Ovary (tissue), 10 donors: ENCODE measurements at regions of chr1 and their contacts with region 1.

Region 1: GRCh38 chr1:58739856-58740466 is 40.1 kb upstream of the MYSM1 start:
- DNase-seq: no peak
- H3K4me3 ChIP-seq: no peak overlapping the region
- H3K27ac ChIP-seq: no peak overlapping the region
- H3K4me1 ChIP-seq: no peaks in the 10 kb centered on the region
- H3K27me3 ChIP-seq: no peaks in the 10 kb centered on the region
- CTCF ChIP-seq: peak; percentile 68 to 85 (median 83)
- EP300 ChIP-seq: no peak
- POLR2A ChIP-seq: no peak

Region 2: GRCh38 chr1:58768971-58769808 is 29.2 kb after region 1 on chr1:
- intact Hi-C with region 1: loop called in 1 of 4 experiments (anchors 2 kb)
- DNase-seq: peak; percentile 78 to 91 (median 86)
- H3K4me3 ChIP-seq: no peak overlapping the region
- H3K27ac ChIP-seq: no peak overlapping the region
- H3K4me1 ChIP-seq: no peaks in the 10 kb centered on the region
- H3K27me3 ChIP-seq: no peaks in the 10 kb centered on the region
- CTCF ChIP-seq: peak; percentile 59 to 73 (median 73)
- EP300 ChIP-seq: no peak
- POLR2A ChIP-seq: no peak

Region 3: GRCh38 chr1:59699227-59699847 is 959.4 kb after region 1 on chr1:
- intact Hi-C with region 1: loop called in 2 of 4 experiments (anchors 10 kb)
- DNase-seq: peak in 1 of 5 donors; percentile 34
- H3K4me3 ChIP-seq: no peak overlapping the region
- H3K27ac ChIP-seq: no peak overlapping the region
- H3K4me1 ChIP-seq: peaks cover 3% of the 10 kb centered on the region
- H3K27me3 ChIP-seq: no peaks in the 10 kb centered on the region
- CTCF ChIP-seq: peak; percentile 75 to 92 (median 86)
- EP300 ChIP-seq: no peak
- POLR2A ChIP-seq: no peak

Region 4: DNA sequence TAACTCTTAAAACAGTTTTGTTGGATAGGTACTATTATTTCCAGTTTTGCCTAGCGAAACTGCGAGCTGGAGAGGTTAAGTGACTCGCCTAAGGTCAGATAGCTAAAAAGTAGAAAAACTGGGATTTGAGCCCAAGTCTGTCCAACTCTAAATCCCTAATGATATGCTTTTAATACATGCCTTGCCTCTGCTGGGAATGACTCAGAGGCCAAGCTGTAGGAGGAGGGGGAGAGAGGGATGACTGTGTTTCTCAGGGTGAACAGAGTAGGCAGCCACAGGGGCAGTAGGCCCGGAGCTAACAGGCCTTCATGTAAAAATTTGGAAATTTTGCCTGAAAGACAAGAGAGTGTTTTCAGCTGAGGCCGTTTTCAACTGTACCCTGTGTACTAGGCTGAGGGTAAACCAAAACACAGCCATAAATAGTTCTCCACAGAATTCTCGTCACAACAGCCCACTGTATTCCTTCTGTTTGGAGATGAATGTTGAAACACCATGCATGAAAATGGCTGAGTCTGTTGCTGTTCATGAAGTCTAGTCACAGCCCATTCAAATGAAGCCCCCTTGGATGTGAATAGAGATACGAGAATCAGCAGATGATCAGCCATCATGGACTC is 967.3 kb after region 1 on chr1:
- intact Hi-C with region 1: loop called in 1 of 4 experiments (anchors 10 kb)
- DNase-seq: peak; percentile 49 to 77 (median 62)
- H3K4me3 ChIP-seq: no peak overlapping the region
- H3K27ac ChIP-seq: peak overlapping the region in 1 of 2 donors; percentile 41
- H3K4me1 ChIP-seq: peaks cover 11% of the 10 kb centered on the region
- H3K27me3 ChIP-seq: no peaks in the 10 kb centered on the region
- CTCF ChIP-seq: no peak
- EP300 ChIP-seq: no peak
- POLR2A ChIP-seq: no peak

Region 5: DNA sequence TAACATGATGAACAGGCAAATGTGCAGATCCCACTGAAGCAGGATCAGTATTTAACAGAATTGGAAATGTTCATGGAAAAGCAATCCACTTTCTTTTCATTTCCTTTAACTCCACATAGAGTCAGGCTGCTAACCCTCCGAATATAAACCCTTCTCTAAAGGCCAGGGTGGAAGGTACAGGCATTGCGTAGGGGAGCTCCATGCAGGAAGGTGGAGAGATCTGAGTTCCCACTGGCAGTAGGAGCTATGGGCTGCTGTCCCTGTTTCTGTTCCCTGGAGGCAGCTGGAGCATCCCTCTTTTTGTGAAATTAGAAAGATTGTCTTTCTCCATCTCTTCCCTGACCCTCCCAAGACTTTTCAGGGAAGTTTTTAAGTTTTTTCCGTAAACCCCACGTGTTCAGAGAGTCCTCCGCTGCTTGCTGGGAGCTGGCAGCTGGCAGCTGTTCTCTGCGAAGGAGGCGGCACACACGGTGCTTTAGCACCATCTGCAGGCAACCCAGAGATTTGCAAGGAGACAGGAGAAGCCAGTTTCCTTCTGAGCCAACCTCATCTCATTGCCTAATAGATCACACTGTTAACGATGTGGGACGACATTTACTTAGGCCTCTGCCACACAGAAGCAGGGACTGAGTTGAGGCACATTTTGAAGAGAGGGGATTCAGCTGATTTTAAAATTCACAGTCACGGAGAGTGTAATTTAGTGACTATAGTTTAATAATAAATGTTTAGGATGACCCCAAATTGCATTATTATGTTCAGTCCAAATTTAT is 1019.4 kb after region 1 on chr1:
- intact Hi-C with region 1: loop called (anchors 2 to 10 kb)
- DNase-seq: peak; percentile 81 to 88 (median 84)
- H3K4me3 ChIP-seq: no peak overlapping the region
- H3K27ac ChIP-seq: peak overlapping the region in 1 of 2 donors; percentile 67
- H3K4me1 ChIP-seq: peaks cover 2% of the 10 kb centered on the region
- H3K27me3 ChIP-seq: no peaks in the 10 kb centered on the region
- CTCF ChIP-seq: peak; percentile 85 to 96 (median 95)
- EP300 ChIP-seq: no peak
- POLR2A ChIP-seq: peak; percentile 35

Region 6: GRCh38 chr1:59947047-59947938 is 1207.3 kb after region 1 on chr1:
- intact Hi-C with region 1: loop called in 1 of 4 experiments (anchors 10 kb)
- DNase-seq: peak in 3 of 5 donors; percentile 14 to 46 (median 42)
- H3K4me3 ChIP-seq: no peak overlapping the region
- H3K27ac ChIP-seq: no peak overlapping the region
- H3K4me1 ChIP-seq: no peaks in the 10 kb centered on the region
- H3K27me3 ChIP-seq: no peaks in the 10 kb centered on the region
- CTCF ChIP-seq: peak in 2 of 3 donors; percentile 33 to 51
- EP300 ChIP-seq: no peak
- POLR2A ChIP-seq: no peak

Region 7: GRCh38 chr1:60315900-60316299 is 1575.9 kb after region 1 on chr1:
- intact Hi-C with region 1: no loop called
- DNase-seq: no peak
- H3K4me3 ChIP-seq: no peak overlapping the region
- H3K27ac ChIP-seq: no peak overlapping the region
- H3K4me1 ChIP-seq: no peaks in the 10 kb centered on the region
- H3K27me3 ChIP-seq: no peaks in the 10 kb centered on the region
- CTCF ChIP-seq: no peak
- EP300 ChIP-seq: no peak
- POLR2A ChIP-seq: no peak